ENCODE measurements at regions of chr3 and their contacts with region 1.

Region 1: DNA sequence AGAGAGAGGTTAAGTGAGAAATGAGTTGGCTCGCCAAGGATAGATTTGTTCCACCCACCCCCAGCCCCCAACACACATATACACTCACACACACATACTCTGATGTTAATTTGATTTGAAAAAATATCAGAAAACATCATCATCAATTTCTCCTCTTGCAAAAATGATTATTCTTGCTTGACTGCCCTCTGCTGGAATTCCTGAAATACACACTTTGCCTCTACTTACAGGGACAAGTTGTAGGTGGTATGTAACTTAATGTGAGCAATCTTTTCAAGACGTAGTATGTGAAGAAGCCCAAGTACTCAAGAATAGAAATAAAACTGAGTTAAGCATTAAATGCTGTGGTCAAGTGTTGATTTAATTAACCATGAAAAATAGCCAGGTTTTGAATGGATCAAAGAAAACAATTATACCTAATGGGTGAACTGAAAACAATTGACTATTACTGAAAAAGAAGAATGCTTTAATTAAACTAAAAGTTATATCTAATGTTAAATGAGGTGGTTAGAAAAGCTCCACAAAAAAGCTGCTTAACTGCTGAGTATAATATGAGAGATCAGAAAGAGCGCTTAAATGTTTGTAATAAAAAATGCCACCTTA is 46.6 kb upstream of the MDFIC2 start:
- DNase-seq: peak; percentile 35
- ATAC-seq: peak; percentile 27
- H3K4me3 ChIP-seq: no peak overlapping the region
- H3K27ac ChIP-seq: no peak overlapping the region
- H3K4me1 ChIP-seq: no peaks in the 10 kb centered on the region
- H3K27me3 ChIP-seq: no peaks in the 10 kb centered on the region
- CTCF ChIP-seq: peak; percentile 68

Region 2: GRCh38 chr3:68997887-68998286 is 1361.2 kb before region 1 on chr3:
- CTCF ChIA-PET with region 1: no interaction called
- POLR2A ChIA-PET with region 1: no interaction called
- intact Hi-C with region 1: no loop called
- DNase-seq: no peak
- ATAC-seq: no peak
- H3K4me3 ChIP-seq: no peak overlapping the region
- H3K27ac ChIP-seq: no peak overlapping the region
- H3K4me1 ChIP-seq: no peaks in the 10 kb centered on the region
- H3K27me3 ChIP-seq: no peaks in the 10 kb centered on the region
- CTCF ChIP-seq: no peak

Region 3: DNA sequence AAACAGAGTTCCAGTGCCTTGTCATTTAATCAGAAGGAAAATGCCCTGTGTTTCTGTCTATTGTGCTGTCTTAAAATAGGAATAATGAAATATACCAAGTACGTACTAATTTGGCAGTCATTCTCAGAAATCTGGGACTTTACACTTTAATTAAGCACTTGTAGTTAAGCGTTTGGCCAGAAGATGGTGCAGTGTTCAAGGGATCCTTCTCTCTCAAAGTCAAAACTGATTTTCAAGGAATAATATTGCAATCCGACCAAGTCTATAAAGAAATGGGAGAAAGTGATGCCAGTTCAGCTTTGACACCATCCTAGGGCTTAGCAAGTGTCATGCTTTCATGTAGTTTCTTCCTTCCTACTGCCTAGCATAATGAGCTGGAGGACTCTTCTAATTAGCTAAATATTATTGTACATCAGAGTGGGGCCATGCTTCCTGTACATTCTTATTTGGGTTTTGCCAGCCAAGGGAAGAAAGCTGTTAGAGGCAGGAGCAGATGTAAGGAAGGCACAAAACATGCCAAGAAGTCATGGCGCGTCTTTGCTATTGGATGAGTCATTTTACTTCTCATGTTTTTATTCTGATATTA is 294.8 kb before region 1 on chr3:
- CTCF ChIA-PET with region 1: no interaction called
- POLR2A ChIA-PET with region 1: no interaction called
- intact Hi-C with region 1: loop called (anchors 1 kb)
- DNase-seq: peak; percentile 53
- ATAC-seq: no peak
- H3K4me3 ChIP-seq: no peak overlapping the region
- H3K27ac ChIP-seq: no peak overlapping the region
- H3K4me1 ChIP-seq: no peaks in the 10 kb centered on the region
- H3K27me3 ChIP-seq: peaks cover 25% of the 10 kb centered on the region
- CTCF ChIP-seq: peak; percentile 60

Region 4: GRCh38 chr3:70090322-70090913 is 268.7 kb before region 1 on chr3:
- CTCF ChIA-PET with region 1: no interaction called
- POLR2A ChIA-PET with region 1: no interaction called
- intact Hi-C with region 1: loop called (anchors 5 kb)
- DNase-seq: peak; percentile 37
- ATAC-seq: peak; percentile 18; the same call in 1 of the 2 replicates
- H3K4me3 ChIP-seq: no peak overlapping the region
- H3K27ac ChIP-seq: no peak overlapping the region
- H3K4me1 ChIP-seq: no peaks in the 10 kb centered on the region
- H3K27me3 ChIP-seq: 0 out of 2 replicates have a peak, but pooled peaks cover 6% of the 10 kb centered on the region
- CTCF ChIP-seq: peak; percentile 66

Region 5: DNA sequence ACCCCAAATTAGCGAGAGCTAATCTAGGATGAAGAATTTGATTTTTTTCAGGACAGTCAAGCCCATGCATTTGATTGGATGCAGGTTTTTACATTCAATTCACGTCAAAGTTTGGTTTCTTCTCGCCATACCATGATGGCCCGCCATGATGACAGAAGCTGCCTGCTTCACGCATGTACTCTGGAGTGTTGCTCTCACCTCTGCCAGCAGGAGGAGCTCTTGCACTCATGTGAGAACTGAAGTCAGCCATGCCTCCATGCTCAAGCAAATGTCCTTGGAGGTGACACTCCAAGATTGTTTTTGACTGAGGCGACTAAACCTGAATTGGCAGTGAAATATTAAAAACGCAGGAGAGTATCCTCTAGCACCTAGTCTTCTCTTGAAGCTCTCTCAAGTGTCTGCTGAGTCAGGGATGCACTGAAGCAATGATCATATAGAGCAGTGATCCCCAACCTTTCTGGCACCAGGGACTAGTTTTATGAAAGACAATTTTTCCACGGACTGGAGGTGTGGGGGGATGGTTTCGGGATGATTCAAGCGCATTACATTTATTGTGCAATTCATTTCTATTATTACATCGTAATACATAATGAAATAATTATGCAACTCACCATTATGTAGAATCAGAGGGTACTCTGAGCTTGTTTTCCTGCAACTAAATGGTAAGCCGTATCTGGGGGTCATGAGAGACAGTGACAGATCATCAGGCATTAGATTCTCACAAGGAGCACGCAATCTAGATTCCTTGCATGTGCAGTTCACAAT is 238.5 kb before region 1 on chr3:
- CTCF ChIA-PET with region 1: no interaction called
- POLR2A ChIA-PET with region 1: no interaction called
- intact Hi-C with region 1: loop called (anchors 1 kb)
- DNase-seq: peak; percentile 84
- ATAC-seq: peak; percentile 76
- H3K4me3 ChIP-seq: peak overlapping the region; percentile 35; the same call in 1 of the 2 replicates
- H3K27ac ChIP-seq: no peak overlapping the region
- H3K4me1 ChIP-seq: no peaks in the 10 kb centered on the region
- H3K27me3 ChIP-seq: 0 out of 2 replicates have a peak, but pooled peaks cover 4% of the 10 kb centered on the region
- CTCF ChIP-seq: peak; percentile 76

Region 6: DNA sequence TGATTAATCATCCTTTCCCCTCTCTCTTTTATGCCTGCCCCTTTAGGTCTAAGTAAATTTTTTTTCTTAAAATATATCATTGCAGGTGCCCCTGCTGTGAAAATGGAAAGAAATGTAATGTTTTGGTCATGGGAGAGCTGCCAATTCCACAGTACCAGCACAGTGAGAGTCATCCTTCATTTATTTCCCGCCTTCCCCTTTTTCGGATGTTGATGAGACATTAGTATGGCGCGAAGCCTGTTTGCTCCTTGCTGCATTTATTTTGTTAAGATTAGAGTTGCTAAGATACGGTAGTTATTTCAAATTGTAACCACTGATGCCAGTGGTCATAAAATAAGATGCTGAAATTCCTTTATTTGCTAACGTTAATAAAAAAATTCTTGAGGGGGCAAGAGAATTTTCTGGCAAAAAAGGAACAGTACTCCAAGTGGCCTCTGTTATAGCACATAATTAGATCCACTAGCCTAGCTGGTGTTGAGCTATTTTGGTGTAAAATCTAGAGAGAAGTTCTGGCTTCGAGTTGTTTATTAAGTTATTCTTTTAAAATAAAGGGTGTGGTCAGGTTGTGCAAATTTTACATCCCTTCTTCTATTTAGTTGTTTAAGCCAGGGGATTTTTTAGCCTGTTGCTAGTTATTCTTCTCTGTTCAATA is 109.4 kb before region 1 on chr3:
- CTCF ChIA-PET with region 1: no interaction called
- POLR2A ChIA-PET with region 1: no interaction called
- intact Hi-C with region 1: loop called (anchors 2 kb)
- DNase-seq: peak; percentile 79
- ATAC-seq: peak; percentile 89
- H3K4me3 ChIP-seq: no peak overlapping the region
- H3K27ac ChIP-seq: peak overlapping the region; percentile 87
- H3K4me1 ChIP-seq: peaks cover 25% of the 10 kb centered on the region
- H3K27me3 ChIP-seq: no peaks in the 10 kb centered on the region
- CTCF ChIP-seq: no peak

Region 7: DNA sequence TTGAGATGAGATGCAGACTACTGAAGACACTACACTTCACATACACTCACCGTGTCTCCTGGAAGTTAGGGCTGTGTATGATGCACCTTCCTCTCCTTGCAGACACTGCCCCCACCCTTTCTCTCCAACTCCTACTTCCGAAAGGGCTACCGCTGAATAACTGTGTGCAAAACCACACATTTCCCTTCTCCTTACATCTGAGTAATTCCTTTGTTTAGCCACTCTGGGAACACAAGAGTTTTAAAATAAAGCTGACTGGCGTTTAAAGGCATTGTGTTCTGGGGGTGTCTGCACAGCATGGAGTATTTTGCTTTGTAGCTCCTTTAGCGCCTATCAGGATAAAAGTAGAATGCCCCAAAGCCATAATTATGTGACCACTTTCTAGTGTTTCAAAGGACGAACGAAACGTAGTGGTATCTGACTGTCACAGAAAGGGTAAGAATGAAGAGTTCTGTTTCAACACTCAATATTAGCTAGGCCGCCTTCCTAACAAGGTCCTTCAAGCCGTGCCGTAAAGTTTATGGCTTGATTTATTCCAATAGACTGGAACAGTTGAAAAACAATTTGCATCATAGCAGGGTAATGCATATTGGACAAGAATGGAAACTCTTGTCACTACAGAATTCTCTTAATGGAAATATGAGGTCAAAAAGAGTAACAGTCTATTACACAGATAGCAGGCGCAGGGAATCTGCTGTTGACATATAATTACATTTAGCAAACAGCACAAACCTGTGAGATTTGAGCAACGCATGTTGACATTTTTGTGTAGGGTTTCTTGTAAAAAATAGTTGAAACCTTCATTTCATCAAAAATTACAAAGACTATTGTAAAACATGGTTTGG is 604.6 kb after region 1 on chr3:
- CTCF ChIA-PET with region 1: no interaction called
- POLR2A ChIA-PET with region 1: interaction called, 11 read pairs
- intact Hi-C with region 1: no loop called
- DNase-seq: peak; percentile 45
- ATAC-seq: peak; percentile 86
- H3K4me3 ChIP-seq: no peak overlapping the region
- H3K27ac ChIP-seq: peak overlapping the region; percentile 22; the same call in 1 of the 2 replicates
- H3K4me1 ChIP-seq: peaks cover 10% of the 10 kb centered on the region; the same call in 1 of the 2 replicates
- H3K27me3 ChIP-seq: no peaks in the 10 kb centered on the region
- CTCF ChIP-seq: no peak

Measured in PC-3 (cell line).